ENCODE measurements at regions of chr5 and their contacts with region 1.

Region 1: DNA sequence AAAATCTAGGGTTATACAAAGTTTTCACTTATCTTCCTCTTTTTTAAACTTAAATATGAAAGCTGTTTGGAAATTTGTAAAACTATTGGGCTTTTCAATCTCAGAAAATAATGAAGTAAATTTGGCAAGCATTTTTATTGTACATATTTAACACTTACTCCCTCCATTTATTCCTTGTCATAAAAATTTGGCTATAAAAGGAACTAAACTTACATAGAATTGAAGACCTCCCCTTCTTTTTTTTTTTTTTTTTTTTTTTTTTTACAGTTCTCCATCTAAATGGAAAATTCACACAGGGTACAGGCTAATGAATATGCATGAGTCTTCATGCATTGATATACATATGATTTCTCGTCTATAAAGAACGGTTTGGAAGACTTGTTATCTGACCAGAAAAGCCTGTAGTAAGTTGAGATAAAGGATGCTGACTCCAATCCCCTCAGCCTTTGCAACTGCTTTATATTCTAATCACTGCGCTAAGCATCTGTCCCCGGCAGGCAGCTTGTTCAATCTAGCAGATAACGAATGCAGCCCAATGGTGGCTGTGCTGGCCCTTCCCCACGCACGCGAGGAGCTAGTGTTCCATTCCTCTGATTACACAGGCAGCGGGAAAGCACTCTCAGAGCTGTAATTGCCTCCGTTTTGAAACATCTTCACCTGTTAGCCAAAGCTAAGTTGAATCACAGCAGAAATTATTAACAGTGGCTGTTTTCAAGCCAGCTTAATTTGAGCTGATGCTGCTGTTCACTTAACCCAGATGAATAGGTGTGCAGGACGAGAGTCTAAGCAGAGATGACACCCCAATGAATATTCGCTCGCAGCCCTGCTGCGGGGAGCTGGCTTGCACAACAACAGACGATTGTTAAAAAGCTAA is 453.8 kb upstream of the ZNF608 start:
- DNase-seq: peak; percentile 31
- H3K4me3 ChIP-seq: peak overlapping the region; percentile 22
- H3K27ac ChIP-seq: no peak overlapping the region
- H3K4me1 ChIP-seq: peaks cover 11% of the 10 kb centered on the region
- H3K27me3 ChIP-seq: no peaks in the 10 kb centered on the region
- CTCF ChIP-seq: no peak

Region 2: GRCh38 chr5:124599028-124599973 is 600.9 kb before region 1 on chr5:
- CTCF ChIA-PET with region 1: interaction called, 12 read pairs
- POLR2A ChIA-PET with region 1: no interaction called
- intact Hi-C with region 1: no loop called
- DNase-seq: no peak
- H3K4me3 ChIP-seq: no peak overlapping the region
- H3K27ac ChIP-seq: no peak overlapping the region
- H3K4me1 ChIP-seq: no peaks in the 10 kb centered on the region
- H3K27me3 ChIP-seq: peaks cover 4% of the 10 kb centered on the region
- CTCF ChIP-seq: no peak

Region 3: DNA sequence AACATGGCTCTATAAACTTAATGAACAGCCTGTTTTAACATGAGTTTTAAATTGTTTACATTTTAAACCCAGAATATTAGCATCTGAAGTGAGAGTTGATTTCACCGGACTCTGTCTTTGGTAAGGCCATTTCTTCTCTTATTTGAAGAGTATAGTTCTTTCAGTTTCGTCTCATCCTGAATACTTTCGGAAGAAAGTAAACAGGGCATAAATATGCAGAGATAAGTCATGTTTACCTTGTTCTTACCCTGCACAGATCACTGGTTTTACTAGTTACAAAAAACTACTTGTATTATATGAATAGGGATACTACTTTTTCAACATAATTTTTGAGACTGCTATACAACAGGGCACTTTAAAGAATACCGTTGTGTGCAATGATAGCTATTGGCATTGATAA is 202.6 kb after region 1 on chr5:
- CTCF ChIA-PET with region 1: no interaction called
- POLR2A ChIA-PET with region 1: interaction called, 11 read pairs
- intact Hi-C with region 1: no loop called
- DNase-seq: no peak
- H3K4me3 ChIP-seq: no peak overlapping the region
- H3K27ac ChIP-seq: no peak overlapping the region
- H3K4me1 ChIP-seq: no peaks in the 10 kb centered on the region
- H3K27me3 ChIP-seq: no peaks in the 10 kb centered on the region
- CTCF ChIP-seq: no peak

Measured in A673 (cell line).